ENCODE measurements at regions of chr6 and their contacts with region 1.

Region 1: GRCh38 chr6:15299430-15300131 is 53.7 kb downstream of the JARID2 start:
- DNase-seq: peak; percentile 90
- ATAC-seq: peak; percentile 88
- H3K4me3 ChIP-seq: peak overlapping the region; percentile 50; the same call in 1 of the 2 replicates
- H3K27ac ChIP-seq: peak overlapping the region; percentile 80
- H3K4me1 ChIP-seq: peaks cover 79% of the 10 kb centered on the region
- H3K27me3 ChIP-seq: no peaks in the 10 kb centered on the region
- CTCF ChIP-seq: no peak
- EP300 ChIP-seq: peak; percentile 59 to 84; a peak in 3 of 4 replicates
- POLR2A ChIP-seq: peak; percentile 47; the same call in 1 of the 2 replicates
- RAD21 ChIP-seq: no peak

Region 2: GRCh38 chr6:15287670-15288375 is 11.8 kb before region 1 on chr6:
- CTCF ChIA-PET with region 1: interaction called, 8 read pairs
- POLR2A ChIA-PET with region 1: interaction called, 8 read pairs
- RAD21 ChIA-PET with region 1: interaction called, 32 read pairs
- SMC1A ChIA-PET with region 1: interaction called, 43 read pairs
- in situ Hi-C with region 1: no loop called
- intact Hi-C with region 1: no loop called
- DNase-seq: peak; percentile 78
- ATAC-seq: peak; percentile 99
- H3K4me3 ChIP-seq: peak overlapping the region; percentile 11; the same call in 1 of the 2 replicates
- H3K27ac ChIP-seq: peak overlapping the region; percentile 79
- H3K4me1 ChIP-seq: peaks cover 24% of the 10 kb centered on the region
- H3K27me3 ChIP-seq: no peaks in the 10 kb centered on the region
- CTCF ChIP-seq: no peak
- EP300 ChIP-seq: peak in 1 of 2 experiments; percentile 78; a peak in 2 of 4 replicates
- POLR2A ChIP-seq: no peak
- RAD21 ChIP-seq: no peak

Region 3: DNA sequence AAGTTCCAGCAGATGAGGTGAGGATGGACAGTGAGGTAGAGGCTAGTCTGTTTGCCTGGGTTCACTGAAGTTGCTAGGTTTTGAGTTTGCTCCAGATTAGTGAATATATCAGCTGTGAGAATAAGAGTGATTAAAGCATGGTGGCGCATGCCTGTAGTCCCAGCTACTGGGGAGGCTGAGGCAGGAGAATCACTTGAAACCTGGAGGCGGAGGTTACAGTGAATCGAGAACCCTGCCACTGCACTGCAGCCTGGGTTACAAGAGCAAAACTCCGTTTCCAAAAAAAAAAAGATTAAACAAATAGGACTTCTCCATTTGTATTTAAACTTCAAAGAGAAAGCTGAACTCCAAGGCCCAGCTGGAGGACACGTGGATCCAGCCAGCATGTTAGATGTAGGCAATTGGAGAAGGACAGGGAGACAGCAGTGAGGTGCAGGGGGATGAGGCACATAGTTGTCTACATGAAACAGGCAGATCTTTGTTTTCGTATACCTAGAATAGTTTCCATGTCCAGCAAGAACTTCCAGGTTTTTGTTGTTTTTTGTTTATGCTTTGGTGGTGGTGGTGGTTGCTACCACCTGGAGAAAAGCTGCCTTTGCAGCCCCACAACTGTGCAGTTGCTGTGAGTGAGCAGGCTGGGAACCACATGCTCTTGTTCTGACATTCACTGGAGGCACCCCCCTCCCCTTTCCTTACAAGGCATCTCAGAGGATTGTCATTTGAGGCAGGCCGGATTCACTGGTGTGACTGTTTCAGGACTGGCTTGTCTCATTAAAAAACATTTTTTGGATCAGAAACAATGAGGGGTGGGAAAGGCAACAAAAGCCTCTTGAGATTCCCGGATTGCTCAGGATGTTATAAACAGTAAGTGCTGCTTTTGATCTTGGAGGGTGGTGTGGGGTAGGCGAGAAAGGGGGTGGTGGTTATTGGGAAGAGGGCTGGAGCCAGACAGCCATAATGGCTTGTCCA is 18.6 kb after region 1 on chr6:
- CTCF ChIA-PET with region 1: interaction called, 15 read pairs
- POLR2A ChIA-PET with region 1: interaction called, 13 read pairs
- RAD21 ChIA-PET with region 1: interaction called, 59 read pairs
- SMC1A ChIA-PET with region 1: interaction called, 301 read pairs
- in situ Hi-C with region 1: no loop called
- intact Hi-C with region 1: no loop called
- DNase-seq: no peak
- ATAC-seq: peak; percentile 52
- H3K4me3 ChIP-seq: peak overlapping the region; percentile 44; the same call in 1 of the 2 replicates
- H3K27ac ChIP-seq: peak overlapping the region; percentile 82
- H3K4me1 ChIP-seq: peaks cover 73% of the 10 kb centered on the region
- H3K27me3 ChIP-seq: no peaks in the 10 kb centered on the region
- CTCF ChIP-seq: no peak
- EP300 ChIP-seq: no peak
- POLR2A ChIP-seq: no peak
- RAD21 ChIP-seq: no peak